ENCODE measurements at regions of chr14 and their contacts with region 1.

Region 1: DNA sequence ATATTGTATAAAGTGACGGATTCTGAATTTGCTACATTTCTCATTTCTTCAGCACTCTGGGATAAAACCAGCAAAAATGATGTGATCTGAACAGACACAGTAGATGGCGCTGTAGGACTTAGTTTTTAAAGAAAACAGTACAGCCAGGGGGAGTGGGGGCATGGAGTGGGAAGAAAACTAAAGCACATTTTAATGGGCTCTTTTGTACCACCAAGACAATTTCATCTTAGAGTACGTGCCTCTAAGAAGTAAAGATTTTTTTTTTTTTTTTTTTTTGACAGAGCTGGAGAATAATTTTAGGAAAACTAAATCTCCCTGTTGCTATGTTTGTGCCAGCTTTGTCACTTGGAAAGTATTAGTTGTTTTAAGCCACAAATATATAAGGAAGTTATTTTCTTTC is 124.4 kb downstream of the RAD51B start:
- DNase-seq: peak; percentile 78 to 79
- ATAC-seq: peak; percentile 83

Region 2: DNA sequence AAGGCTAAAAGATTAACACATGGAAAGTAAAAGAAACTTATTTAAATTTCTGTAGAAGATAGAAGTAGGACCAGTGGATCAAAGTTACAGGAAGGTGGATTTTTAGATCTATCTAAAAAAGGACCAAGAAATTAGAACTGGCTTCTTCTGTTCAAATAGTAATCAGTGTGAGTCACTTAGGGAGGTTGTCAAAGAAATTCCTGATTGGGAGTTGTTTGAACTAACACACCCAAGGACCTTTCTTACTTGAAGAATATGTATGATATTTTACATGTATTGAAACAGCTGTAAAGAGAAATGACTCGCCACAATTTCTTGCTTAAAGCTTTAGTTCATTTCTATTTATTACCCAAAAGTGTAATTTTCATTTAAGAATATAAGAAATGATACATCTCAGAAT is 132.5 kb after region 1 on chr14:
- intact Hi-C with region 1: no loop called
- DNase-seq: no peak
- ATAC-seq: peak; percentile 82

Region 3: DNA sequence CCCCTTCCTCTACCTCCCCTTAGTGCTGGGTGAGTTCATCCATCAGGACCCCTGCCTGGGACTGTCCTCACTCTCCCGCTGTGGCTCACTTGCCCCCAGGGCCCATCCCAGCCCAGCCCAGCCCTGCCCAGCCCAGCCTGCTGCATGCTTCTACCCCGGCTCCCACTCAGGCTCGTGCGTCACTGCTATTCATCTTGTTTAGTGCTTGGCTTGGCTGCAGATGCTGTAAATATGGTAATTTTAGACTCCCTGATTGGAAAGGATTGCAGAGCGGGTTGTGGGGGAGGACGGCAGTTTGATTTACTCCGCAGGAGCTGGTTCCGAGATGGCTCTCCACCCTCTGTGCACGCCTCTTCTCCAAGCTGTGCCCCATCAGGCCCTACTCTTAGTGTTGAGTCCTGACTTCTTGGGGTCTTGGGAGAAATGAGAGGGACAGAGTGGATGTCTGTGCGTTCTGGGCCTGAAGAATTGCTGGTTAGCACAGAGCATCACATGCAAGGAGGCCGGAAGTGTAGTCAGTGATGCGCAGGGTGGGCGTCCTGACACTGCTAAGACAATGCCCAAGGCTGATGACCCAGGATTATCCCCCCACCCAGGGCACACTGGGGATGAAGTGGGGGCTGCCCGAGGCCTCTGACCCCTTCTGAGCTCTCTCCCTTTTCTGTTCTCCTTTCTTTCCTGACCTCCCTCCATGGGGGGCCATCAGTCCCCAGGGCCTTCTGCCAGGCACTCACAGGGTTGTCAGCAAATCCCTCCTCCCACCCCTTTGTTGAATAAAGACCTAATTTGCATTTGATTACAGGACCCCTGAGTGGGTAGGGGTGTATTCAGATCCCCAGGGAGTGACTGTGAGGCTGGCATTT is 604.5 kb after region 1 on chr14:
- intact Hi-C with region 1: loop called in 1 of 2 experiments (anchors 10 kb)
- DNase-seq: peak; percentile 56 to 83
- ATAC-seq: peak; percentile 63

Region 4: DNA sequence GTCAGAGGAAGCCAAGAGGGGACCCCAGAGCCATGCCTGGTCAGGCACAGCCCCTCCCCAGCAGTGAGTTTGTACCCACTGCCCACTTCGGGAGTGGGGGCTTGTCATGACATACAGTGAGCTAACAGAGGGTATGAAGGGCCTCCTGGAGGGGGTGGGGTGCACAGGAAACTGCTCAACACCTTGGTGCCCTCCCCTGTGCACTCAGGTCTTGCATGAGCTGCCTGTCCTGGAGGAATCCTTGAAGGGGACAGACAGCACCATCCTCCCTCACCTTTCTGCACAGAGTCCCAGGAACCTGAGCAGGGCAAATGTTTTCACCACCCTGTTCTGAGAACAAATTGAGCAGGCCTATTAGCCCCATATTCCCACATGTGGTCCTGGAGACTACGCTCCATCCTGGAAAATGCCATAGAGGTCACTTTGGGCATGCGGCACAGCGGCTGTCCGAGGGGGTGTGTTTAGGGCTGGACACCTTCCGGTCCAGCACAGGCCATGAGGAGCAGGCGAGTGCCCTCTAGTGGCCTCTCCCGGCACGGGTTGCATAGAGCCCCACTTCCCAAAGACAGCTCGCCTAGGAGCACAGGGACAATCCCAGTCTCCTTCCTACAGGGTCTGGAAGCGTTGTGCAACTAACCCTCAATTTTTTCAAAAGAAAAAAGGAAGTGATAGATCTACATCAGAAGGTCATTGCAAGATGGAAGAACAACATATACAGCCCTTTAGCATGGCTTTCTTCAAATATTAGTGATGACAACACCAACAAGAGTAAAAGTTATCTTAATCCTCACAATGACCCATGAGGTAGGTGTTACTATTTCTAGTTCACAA is 880.8 kb after region 1 on chr14:
- intact Hi-C with region 1: loop called in 1 of 2 experiments (anchors 5 kb)
- DNase-seq: peak; percentile 76 to 93
- ATAC-seq: peak; percentile 93

Measured in left colon (tissue), 2 donors.